Spleen (tissue), 13 donors: ENCODE measurements at regions of chr17 and their contacts with region 1.

Region 1: DNA sequence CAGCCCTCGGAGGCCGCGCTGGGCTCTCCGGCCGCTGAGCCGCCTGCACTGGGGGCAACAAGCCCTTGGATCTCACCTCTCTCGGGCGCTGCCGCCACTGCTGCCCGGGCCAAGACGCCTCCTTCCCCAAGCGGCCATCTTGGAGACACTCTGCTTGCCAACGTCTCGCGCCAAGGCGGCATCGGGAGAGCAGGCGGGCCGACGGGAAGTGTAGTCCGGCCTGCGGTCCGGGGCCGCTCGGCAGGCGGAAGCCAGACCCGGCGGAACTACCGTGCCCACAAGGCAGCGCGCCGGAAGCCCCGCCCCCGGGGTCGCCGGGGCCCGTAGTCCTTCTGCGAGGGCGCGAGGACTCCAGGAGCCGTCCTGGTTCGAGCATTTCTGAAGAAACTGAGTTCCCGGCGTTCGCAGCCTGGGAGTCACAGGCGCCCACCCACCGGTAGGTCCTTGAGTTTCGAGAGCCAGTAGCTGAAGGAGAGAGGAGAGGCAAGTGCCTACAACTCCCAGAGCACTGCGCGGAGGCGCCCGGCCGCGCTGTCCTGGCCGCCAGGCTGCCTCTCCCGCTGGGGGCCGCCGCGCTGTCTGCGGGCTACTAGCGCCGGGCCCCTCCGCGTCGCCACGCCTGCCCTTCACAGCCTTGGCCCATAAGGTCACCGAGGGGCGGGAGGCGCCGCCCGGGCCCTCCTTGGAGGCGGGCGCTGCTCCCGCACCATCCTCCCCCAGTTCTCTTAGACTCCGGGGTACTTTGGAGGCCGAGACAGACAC is at the start of gene TMEM11:
- DNase-seq: peak; percentile 99
- H3K4me3 ChIP-seq: peak within 1 kb of the TSS; percentile 82 to 99 (median 98)
- H3K27ac ChIP-seq: peak within 1 kb of the TSS; percentile 90 to 98 (median 94)
- H3K4me1 ChIP-seq: peaks cover 31 to 80% (median 63%) of the 10 kb centered on the region in 6 donors
- H3K27me3 ChIP-seq: no peaks in the 10 kb centered on the region
- CTCF ChIP-seq: peak in 8 of 11 experiments; percentile 5 to 70 (median 46)
- POLR2A ChIP-seq: peak in 2 of 3 donors; percentile 19 to 75
- total RNA-seq, gene TMEM11: 17.9 to 25.0 (median 19.9) TPM

Region 2: DNA sequence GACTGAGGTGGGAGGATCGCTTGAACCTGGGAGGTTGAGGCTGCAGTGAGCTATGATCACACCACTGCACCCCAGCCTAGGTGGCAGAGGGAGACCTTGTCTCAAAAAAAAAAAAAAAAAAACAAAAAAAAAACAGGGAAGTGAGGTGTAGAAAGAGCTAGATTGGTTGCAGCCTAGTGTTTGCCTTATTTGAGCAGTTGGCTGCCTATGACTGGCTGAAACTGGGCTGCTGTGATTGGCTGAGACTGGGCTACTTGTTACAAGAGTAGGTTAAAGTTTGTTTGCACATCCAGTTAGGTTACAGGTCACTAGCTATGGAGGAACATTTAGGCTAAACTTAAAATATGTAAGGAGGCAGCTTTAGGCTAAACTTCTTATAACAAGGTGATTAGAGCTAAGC is 81.8 kb before region 1 on chr17:
- intact Hi-C with region 1: loop called (anchors 10 kb)
- DNase-seq: peak; percentile 77
- H3K4me3 ChIP-seq: no peak overlapping the region
- H3K27ac ChIP-seq: peak overlapping the region in 4 of 8 donors; percentile 10 to 74 (median 62)
- H3K4me1 ChIP-seq: peaks cover 11 to 61% (median 35%) of the 10 kb centered on the region in 6 donors
- H3K27me3 ChIP-seq: no peaks in the 10 kb centered on the region
- CTCF ChIP-seq: no peak
- POLR2A ChIP-seq: no peak

Region 3: GRCh38 chr17:21287596-21288449 is 73.6 kb after region 1 on chr17:
- intact Hi-C with region 1: no loop called
- DNase-seq: peak; percentile 98
- H3K4me3 ChIP-seq: peak overlapping the region in 7 of 8 donors; percentile 87 to 99 (median 96)
- H3K27ac ChIP-seq: peak overlapping the region; percentile 87 to 98 (median 96)
- H3K4me1 ChIP-seq: peaks cover 47 to 95% (median 69%) of the 10 kb centered on the region in 6 donors
- H3K27me3 ChIP-seq: peaks cover 0 to 4% (median 0%) of the 10 kb centered on the region in 7 donors
- CTCF ChIP-seq: peak in 5 of 11 experiments; percentile 3 to 34 (median 32)
- POLR2A ChIP-seq: no peak